WTC11 (cell line): ENCODE measurements at regions of chr7 and their contacts with region 1.

Region 1: GRCh38 chr7:99616359-99617191 is at the start of gene ZSCAN25:
- DNase-seq: peak; percentile 94
- ATAC-seq: peak; percentile 97
- H3K4me3 Mint-ChIP-seq: peak within 1 kb of the TSS; percentile 95
- H3K27ac Mint-ChIP-seq: peak within 1 kb of the TSS; percentile 93
- H3K4me1 Mint-ChIP-seq: peaks cover 11% of the 10 kb centered on the region
- H3K27me3 Mint-ChIP-seq: peaks cover 8% of the 10 kb centered on the region
- CTCF ChIP-seq: no peak
- total RNA-seq, gene ZSCAN25: 16.3 to 20.1 TPM (median 19.9 TPM) in 3 replicates

Region 2: GRCh38 chr7:99374103-99375064 is 242.2 kb before region 1 on chr7 and contains the start of gene ARPC1B:
- CTCF ChIA-PET with region 1: no interaction called
- POLR2A ChIA-PET with region 1: no interaction called
- DNase-seq: peak; percentile 74
- ATAC-seq: peak; percentile 74
- H3K4me3 Mint-ChIP-seq: peak within 1 kb of the TSS; percentile 84
- H3K27ac Mint-ChIP-seq: 0 out of 2 replicates have a peak within 1 kb of the TSS, but pooled peaks have one; percentile 65
- H3K4me1 Mint-ChIP-seq: peaks cover 15% of the 10 kb centered on the region
- H3K27me3 Mint-ChIP-seq: peaks cover 12% of the 10 kb centered on the region
- CTCF ChIP-seq: no peak
- total RNA-seq, gene ARPC1B: 63.3 to 70.2 TPM (median 66.2 TPM) in 3 replicates

Region 3: GRCh38 chr7:99558306-99559174 is 58.0 kb before region 1 on chr7 and contains the start of gene ZNF655:
- CTCF ChIA-PET with region 1: interaction called, 15 read pairs
- POLR2A ChIA-PET with region 1: interaction called, 3 read pairs
- DNase-seq: peak; percentile 94
- ATAC-seq: peak; percentile 97
- H3K4me3 Mint-ChIP-seq: peak within 1 kb of the TSS; percentile 98
- H3K27ac Mint-ChIP-seq: peak within 1 kb of the TSS; percentile 94
- H3K4me1 Mint-ChIP-seq: peaks cover 11% of the 10 kb centered on the region
- H3K27me3 Mint-ChIP-seq: no peaks in the 10 kb centered on the region
- CTCF ChIP-seq: no peak
- total RNA-seq, gene ZNF655: 37.1 to 40.4 TPM (median 38.2 TPM) in 3 replicates

Region 4: GRCh38 chr7:99579956-99580777 is 36.4 kb before region 1 on chr7:
- CTCF ChIA-PET with region 1: interaction called, 10 read pairs
- POLR2A ChIA-PET with region 1: no interaction called
- DNase-seq: peak; percentile 81
- ATAC-seq: peak; percentile 81
- H3K4me3 Mint-ChIP-seq: peak overlapping the region; percentile 92
- H3K27ac Mint-ChIP-seq: peak overlapping the region; percentile 93
- H3K4me1 Mint-ChIP-seq: peaks cover 24% of the 10 kb centered on the region
- H3K27me3 Mint-ChIP-seq: no peaks in the 10 kb centered on the region; the same call in 1 of the 2 replicates
- CTCF ChIP-seq: peak; percentile 58; the same call in 1 of the 2 replicates

Region 5: GRCh38 chr7:99597762-99598501 is 18.6 kb before region 1 on chr7 and contains the start of gene TMEM225B:
- CTCF ChIA-PET with region 1: interaction called, 27 read pairs
- POLR2A ChIA-PET with region 1: no interaction called
- DNase-seq: peak; percentile 24
- ATAC-seq: peak; percentile 14
- H3K4me3 Mint-ChIP-seq: no peak within 1 kb of the TSS
- H3K27ac Mint-ChIP-seq: no peak within 1 kb of the TSS
- H3K4me1 Mint-ChIP-seq: no peaks in the 10 kb centered on the region
- H3K27me3 Mint-ChIP-seq: no peaks in the 10 kb centered on the region; the same call in 1 of the 2 replicates
- CTCF ChIP-seq: no peak
- total RNA-seq, gene TMEM225B: 0.78 to 0.81 TPM (median 0.78 TPM) in 3 replicates